Left colon (tissue), 2 donors: ENCODE measurements at regions of chr10 and their contacts with region 1.

Region 1: DNA sequence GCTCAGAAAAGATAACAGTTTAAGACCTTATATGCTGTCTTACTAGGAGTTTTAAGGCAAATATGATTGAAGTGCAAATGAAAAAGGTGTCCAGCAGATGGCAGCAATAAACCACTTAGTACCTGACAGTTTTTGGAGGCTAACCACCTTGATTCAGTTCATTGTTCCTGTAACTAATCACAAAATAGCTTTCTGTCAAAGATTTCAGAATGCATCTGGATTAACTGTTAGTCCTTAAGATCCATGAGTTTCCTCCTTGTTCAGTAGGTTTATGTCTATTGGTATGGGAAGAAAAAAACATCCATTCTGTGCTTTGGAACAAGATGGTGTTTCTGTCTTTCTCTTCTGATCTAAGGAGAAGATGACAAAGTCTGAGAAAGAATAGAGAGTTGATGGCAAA is 46.6 kb downstream of the CCSER2 start:
- DNase-seq: no peak
- ATAC-seq: peak; percentile 66

Region 2: DNA sequence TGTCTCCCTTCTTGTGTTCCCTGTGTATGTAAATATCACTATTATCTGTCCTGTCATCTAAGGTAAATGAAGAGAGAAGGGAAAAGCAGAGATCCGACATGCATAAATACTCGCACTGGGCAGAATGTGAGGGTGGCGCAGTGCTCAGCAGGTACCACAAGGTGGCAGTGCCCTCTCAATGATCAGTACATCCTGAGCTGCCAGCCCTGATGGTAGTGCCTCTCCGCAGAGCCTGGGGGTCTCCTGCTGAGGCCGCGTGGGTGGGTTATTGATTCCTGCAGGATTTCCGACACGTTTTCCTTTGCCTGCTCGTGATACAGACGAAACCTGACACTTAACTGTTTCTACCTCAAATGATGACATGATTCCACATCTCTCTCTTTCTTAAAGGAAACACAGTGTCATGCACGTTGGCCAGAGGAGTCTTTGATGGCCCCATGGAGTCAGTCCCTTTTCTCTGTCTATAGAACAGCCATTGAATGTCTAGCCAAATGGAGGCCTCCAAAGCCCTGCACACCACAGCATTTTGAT is 110.3 kb before region 1 on chr10:
- intact Hi-C with region 1: loop called in 1 of 2 experiments (anchors 10 kb)
- DNase-seq: peak; percentile 39 to 76
- ATAC-seq: peak; percentile 86

Region 3: DNA sequence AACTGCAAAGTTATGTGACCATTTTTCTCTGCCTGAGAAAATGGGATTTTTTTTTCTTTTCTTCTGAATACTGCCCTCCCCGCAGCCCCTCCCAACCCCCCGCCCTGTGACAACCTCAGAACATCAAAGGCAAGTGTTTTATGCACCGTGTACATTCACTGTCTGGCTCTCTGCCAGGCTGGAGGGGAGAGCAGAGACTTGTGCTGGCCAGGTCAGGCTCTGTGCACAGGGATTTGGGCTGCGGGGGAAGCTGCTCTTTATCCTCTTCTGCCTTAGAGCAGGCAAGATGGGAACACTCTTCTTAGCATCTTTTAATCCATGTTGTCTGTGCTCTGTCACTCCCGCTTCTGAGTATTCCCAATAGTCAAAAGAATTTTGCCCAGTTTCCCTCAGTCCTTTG is 148.5 kb after region 1 on chr10:
- intact Hi-C with region 1: no loop called
- DNase-seq: peak in 1 of 2 donors; percentile 36
- ATAC-seq: peak; percentile 54

Region 4: GRCh38 chr10:84665883-84666463 is 291.0 kb after region 1 on chr10:
- intact Hi-C with region 1: no loop called
- DNase-seq: peak in 1 of 2 donors; percentile 30
- ATAC-seq: peak; percentile 34